Colonic mucosa (tissue), 4 donors: ENCODE measurements at regions of chr2 and their contacts with region 1.

Region 1: GRCh38 chr2:128069769-128070168 is 21.2 kb upstream of the UGGT1 start:
- DNase-seq: peak; percentile 27
- H3K4me3 ChIP-seq: no peak overlapping the region
- H3K27ac ChIP-seq: no peak overlapping the region
- H3K4me1 ChIP-seq: no peaks in the 10 kb centered on the region
- H3K27me3 ChIP-seq: no peaks in the 10 kb centered on the region
- CTCF ChIP-seq: no peak

Region 2: DNA sequence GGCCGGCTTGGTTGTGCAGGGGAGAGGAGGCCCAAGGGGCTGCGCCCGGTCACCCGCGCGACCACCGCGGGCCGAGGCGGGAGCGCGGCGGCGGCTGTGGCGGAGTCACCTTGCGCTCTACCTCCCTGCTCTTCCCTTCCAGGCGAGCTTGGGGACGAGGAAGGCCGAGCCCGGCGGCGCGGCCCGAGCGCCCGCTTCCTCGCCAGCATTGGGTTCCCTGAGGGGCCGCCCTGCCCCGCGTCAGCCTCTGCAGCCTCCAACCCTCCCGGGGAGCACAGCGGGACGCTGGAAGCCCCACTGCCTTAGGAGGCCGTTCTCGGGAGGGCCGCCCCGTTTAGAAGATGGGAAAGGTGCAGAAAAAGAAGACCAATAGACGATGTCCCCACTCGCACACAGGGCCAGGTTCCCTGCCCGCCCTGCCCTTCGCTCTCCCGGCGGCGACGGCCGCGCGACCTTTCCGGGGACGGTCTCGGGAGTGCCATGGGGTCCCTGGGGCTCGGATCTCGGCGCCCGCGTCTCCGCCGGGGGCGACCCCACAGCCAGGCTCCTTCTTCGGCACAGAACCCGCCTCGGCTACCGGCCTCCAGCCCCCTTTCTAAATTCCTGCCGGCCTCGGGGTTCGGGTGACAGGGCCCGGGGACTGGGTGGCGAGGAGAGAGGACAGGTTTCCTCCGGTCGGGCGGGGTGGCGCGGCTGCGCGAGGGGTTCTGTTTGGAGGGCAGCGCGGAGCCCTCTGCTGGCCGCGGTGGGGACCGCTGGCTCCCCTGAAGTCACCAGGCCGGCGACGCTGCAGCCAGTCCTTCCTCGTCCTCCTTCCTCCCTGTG is 163.4 kb after region 1 on chr2:
- intact Hi-C with region 1: loop called (anchors 10 kb)
- DNase-seq: peak; percentile 92
- H3K4me3 ChIP-seq: peak overlapping the region; percentile 60
- H3K27ac ChIP-seq: peak overlapping the region; percentile 70
- H3K4me1 ChIP-seq: no peaks in the 10 kb centered on the region
- H3K27me3 ChIP-seq: no peaks in the 10 kb centered on the region
- CTCF ChIP-seq: peak; percentile 93